Sigmoid colon (tissue), 7 donors: ENCODE measurements at regions of chr2 and their contacts with region 1.

Region 1: GRCh38 chr2:25204190-25204838 is 35.9 kb upstream of the POMC start:
- DNase-seq: no peak
- H3K4me3 ChIP-seq: peak overlapping the region in 3 of 4 donors; percentile 25 to 42 (median 38)
- H3K27ac ChIP-seq: peak overlapping the region in 2 of 4 donors; percentile 10 to 28
- H3K4me1 ChIP-seq: peaks cover 0 to 5% (median 0%) of the 10 kb centered on the region in 4 donors
- H3K27me3 ChIP-seq: no peaks in the 10 kb centered on the region
- CTCF ChIP-seq: no peak
- EP300 ChIP-seq: no peak
- POLR2A ChIP-seq: no peak

Region 2: DNA sequence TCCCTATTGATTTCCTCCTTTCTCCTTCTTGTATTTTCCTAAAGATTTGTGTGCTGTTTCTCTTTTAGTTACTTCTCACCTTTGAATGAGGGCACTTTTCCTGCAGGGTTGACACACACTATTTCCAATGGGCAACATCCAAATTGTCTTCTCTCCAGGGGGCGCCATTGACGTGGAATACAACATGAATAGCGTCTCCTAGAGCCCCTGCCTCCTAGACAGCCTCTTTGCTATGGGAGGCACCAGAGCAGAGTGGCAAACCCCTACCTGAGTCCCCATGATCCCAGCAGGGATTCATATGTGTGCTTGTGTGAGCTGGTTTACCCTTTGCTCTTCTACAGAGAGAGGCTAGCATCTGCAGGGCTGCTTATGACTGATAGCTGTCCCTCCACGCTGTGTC is 782.6 kb before region 1 on chr2:
- intact Hi-C with region 1: loop called (anchors 10 kb)
- DNase-seq: no peak
- H3K4me3 ChIP-seq: no peak overlapping the region
- H3K27ac ChIP-seq: no peak overlapping the region
- H3K4me1 ChIP-seq: no peaks in the 10 kb centered on the region
- H3K27me3 ChIP-seq: no peaks in the 10 kb centered on the region
- CTCF ChIP-seq: peak in 3 of 4 experiments; percentile 21 to 43 (median 42)
- EP300 ChIP-seq: no peak
- POLR2A ChIP-seq: no peak